Activated T-helper 1 cell treated with anti-CD3 and anti-CD28 coated beads, Interleukin-12 subunit alpha, Interleukin-12 subunit beta, Interleukin-2, Interleukin-4 antibody, amounts not matched to agents 30 ng/mL and 10 ng/mL and 1 ng/mL, durations not matched to agents 14 hours and 24 hours and 36 hours (primary cell): ENCODE measurements at regions of chr3 and their contacts with region 1.

Region 1: DNA sequence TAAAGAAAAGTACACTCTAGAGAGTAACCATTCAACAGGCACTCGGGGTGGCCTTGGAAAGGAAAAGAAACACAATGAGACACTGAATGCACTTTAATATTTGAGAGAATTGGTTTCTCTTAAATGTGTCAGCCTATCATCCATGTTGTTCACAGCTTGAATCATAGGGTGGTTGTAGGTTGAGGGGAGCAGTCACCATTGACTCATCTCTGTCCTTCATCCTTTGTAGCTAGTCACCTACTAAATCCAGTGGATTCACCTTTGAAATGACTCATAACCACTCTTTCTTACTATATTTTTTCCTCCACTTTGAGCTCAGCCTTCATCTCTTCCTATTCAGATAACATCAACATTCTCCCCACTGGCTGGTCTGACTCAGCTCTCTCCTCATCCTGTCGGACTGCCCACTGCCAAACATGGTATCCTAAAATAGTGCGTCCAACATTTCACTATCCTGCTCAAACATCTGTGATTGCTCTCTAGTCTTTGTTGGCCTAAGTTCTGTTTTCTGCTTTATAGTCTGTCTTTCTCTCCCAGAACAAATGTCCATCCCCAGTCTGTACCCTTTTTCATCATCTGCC is 182.7 kb upstream of the GADL1 start:
- DNase-seq: peak; percentile 35
- H3K4me3 Mint-ChIP-seq: peak overlapping the region; percentile 38
- H3K27ac Mint-ChIP-seq: peak overlapping the region; percentile 85
- H3K4me1 Mint-ChIP-seq: peaks cover 46% of the 10 kb centered on the region
- H3K27me3 Mint-ChIP-seq: peaks cover 3% of the 10 kb centered on the region

Region 2: DNA sequence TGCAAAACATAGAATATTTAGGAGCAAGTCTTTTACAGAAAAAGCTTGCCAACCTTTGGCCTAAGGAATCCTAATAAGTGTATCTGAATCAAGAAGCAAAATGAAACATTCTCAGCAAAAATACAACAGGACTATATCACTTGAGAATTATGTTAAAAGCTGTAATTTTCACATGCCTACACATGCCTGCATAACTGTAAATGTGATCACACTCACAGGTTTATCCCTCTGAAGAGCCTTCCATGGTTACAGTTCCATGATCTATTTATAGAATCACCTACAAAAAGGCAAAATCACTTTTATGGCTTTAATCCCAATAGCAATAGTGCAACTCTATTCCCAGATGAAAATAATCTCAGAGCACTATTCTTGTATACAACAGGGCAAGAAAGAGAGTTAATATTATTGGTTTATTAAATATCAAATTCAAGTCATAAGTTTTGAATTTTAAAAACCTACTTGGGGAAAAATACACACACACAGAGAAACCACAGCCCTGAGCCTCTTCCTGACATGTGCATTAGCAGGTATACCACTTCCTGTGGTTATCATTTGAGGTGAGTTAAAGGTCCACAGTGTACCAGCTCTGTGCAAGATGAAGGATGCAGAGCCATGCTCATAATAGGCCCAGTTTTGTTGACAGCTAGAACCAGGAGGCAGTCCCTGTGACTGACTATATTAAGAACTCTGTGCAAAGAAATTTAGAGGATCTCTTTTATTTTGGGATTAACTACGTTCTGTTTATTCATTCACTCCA is 723.2 kb before region 1 on chr3:
- intact Hi-C with region 1: loop called (anchors 2 kb)
- DNase-seq: peak; percentile 70
- H3K4me3 Mint-ChIP-seq: peak overlapping the region; percentile 27
- H3K27ac Mint-ChIP-seq: peak overlapping the region; percentile 70
- H3K4me1 Mint-ChIP-seq: peaks cover 85% of the 10 kb centered on the region
- H3K27me3 Mint-ChIP-seq: peaks cover 14% of the 10 kb centered on the region

Region 3: GRCh38 chr3:30644593-30645012 is 432.5 kb before region 1 on chr3:
- intact Hi-C with region 1: loop called (anchors 5 kb)
- DNase-seq: peak; percentile 66
- H3K4me3 Mint-ChIP-seq: peak overlapping the region; percentile 57
- H3K27ac Mint-ChIP-seq: peak overlapping the region; percentile 94
- H3K4me1 Mint-ChIP-seq: peaks cover 93% of the 10 kb centered on the region
- H3K27me3 Mint-ChIP-seq: no peaks in the 10 kb centered on the region

Region 4: GRCh38 chr3:31132132-31132769 is 55.1 kb after region 1 on chr3:
- intact Hi-C with region 1: loop called (anchors 2 kb)
- DNase-seq: no peak
- H3K4me3 Mint-ChIP-seq: no peak overlapping the region
- H3K27ac Mint-ChIP-seq: no peak overlapping the region
- H3K4me1 Mint-ChIP-seq: peaks cover 17% of the 10 kb centered on the region
- H3K27me3 Mint-ChIP-seq: no peaks in the 10 kb centered on the region

Region 5: DNA sequence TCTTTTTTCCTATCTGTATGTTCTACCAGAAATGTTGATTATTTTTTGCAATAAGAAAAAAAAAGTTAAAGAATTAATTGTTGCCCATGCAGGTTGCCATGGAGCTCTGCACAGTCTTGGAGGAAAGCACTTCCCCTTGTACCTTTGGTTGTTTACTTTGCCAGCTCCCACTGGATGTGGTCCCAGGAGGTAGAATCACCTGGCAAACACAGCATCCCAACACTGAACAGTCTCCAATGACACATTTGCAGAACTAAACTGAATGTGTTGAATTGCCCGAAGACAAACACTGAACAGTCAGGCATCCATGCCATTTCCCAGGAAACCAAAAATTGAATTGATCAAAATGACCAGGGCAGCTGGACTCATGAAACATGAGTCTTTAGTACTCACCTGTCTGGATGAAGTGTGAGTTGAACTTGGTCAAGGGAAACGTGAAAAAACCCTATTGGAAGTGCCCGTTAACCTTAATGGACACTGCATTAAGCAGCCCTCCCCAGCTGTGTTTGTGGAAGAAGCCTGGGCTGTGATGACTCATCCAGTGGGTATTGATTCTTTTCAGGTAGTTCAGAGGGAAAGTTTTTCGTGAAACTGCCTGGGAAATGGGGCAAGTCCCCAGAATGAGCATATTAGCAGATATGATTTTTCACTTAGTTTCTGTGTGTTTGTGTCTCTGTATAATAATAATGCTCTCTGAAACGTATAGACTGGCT is 170.9 kb after region 1 on chr3:
- intact Hi-C with region 1: loop called (anchors 1 kb)
- DNase-seq: no peak
- H3K4me3 Mint-ChIP-seq: no peak overlapping the region
- H3K27ac Mint-ChIP-seq: peak overlapping the region; percentile 75
- H3K4me1 Mint-ChIP-seq: peaks cover 51% of the 10 kb centered on the region
- H3K27me3 Mint-ChIP-seq: no peaks in the 10 kb centered on the region

Region 6: GRCh38 chr3:31472479-31473390 is 395.6 kb after region 1 on chr3:
- intact Hi-C with region 1: loop called (anchors 1 kb)
- DNase-seq: peak; percentile 17
- H3K4me3 Mint-ChIP-seq: no peak overlapping the region
- H3K27ac Mint-ChIP-seq: peak overlapping the region; percentile 59
- H3K4me1 Mint-ChIP-seq: peaks cover 19% of the 10 kb centered on the region
- H3K27me3 Mint-ChIP-seq: peaks cover 9% of the 10 kb centered on the region

Region 7: DNA sequence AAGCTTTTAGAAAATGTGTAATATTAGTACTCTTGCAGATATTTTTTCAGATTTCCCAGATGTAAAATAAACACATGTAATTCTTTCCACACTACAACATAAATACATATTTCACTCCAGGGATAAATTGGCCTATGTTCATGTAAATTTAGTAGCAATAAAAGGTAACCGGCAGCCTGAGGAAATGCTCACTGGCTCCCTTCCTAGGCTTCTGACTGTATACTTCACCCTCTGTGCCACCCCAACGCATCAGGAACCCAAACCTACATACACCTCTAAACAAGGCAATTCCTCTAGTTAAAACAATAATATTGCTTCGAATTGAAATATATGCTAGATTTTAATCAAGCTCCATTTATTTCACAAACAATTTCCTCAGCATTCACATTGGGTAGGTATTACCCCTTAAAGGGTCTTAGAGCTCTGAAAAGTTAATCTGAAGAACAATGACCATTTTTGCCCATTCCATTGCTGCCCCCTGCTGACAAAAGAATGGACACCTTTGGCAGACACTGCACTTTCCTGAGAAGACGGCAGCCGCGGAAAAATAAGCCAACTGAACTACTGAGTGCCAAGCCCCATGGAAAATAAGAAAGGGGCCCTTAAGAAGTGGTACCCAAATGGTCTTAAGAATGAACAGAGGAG is 691.5 kb after region 1 on chr3:
- intact Hi-C with region 1: loop called (anchors 1 kb)
- DNase-seq: peak; percentile 42
- H3K4me3 Mint-ChIP-seq: peak overlapping the region; percentile 41
- H3K27ac Mint-ChIP-seq: peak overlapping the region; percentile 52
- H3K4me1 Mint-ChIP-seq: peaks cover 82% of the 10 kb centered on the region
- H3K27me3 Mint-ChIP-seq: no peaks in the 10 kb centered on the region